ENCODE measurements at regions of chr1 and their contacts with region 1.

Region 1: DNA sequence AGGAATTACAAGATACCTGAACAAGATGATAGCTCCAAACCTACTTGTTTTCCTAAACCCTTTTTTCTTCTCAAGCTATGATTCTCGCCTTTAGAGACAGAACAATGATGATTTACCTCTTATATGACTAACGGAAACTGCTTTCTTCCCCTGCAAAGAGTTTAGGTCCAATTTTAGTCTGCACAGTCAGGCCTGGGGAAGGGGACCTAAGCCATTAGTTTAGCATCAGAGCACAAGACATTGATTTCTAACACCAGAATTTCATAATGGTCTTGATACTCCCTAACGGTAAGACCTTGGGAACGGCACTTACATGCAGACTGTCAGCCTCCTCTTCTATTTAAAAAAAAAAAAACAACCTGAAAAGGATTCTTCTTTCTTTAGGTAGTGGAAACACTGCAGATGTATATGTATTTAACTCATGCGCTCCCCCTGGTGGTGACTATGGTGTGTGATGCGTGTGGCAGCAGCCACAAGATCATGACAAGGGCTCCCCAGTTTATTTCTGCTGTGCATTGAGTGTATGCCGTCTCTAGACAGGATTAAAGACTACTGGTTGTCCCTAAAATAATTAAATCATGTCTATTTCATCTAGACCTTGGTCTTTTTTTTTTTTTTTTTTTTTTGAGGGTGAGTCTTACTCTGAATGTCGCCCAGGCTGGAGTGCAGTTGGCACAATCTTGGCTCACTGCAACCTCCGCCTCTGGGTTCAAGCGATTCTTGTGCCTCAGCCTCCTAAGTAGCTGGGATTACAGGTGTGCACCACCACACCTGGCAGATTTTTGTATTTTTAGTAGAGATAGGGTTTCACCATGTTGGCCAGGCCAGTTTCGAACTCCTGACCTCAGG is 37.3 kb upstream of the TMEM222 start:
- DNase-seq: peak; percentile 79 to 86
- H3K4me3 ChIP-seq: no peak overlapping the region
- H3K27ac ChIP-seq: no peak overlapping the region
- H3K4me1 ChIP-seq: no peaks in the 10 kb centered on the region
- H3K27me3 ChIP-seq: no peaks in the 10 kb centered on the region
- CTCF ChIP-seq: peak; percentile 57 to 71 (median 70)
- POLR2A ChIP-seq: no peak

Region 2: GRCh38 chr1:25874934-25875855 is 1409.5 kb before region 1 on chr1 and contains the start of gene PAQR7:
- intact Hi-C with region 1: no loop called
- DNase-seq: peak; percentile 67 to 70
- H3K4me3 ChIP-seq: peak within 1 kb of the TSS; percentile 54 to 80 (median 72)
- H3K27ac ChIP-seq: peak within 1 kb of the TSS; percentile 93 to 96
- H3K4me1 ChIP-seq: peaks cover 3 to 13% of the 10 kb centered on the region in 2 donors
- H3K27me3 ChIP-seq: no peaks in the 10 kb centered on the region
- CTCF ChIP-seq: no peak
- POLR2A ChIP-seq: no peak
- total RNA-seq, gene PAQR7: 4.2 to 8.2 (median 7.2) TPM

Region 3: GRCh38 chr1:27102707-27103491 is 181.8 kb before region 1 on chr1:
- intact Hi-C with region 1: loop called (anchors 5 kb)
- DNase-seq: peak; percentile 64 to 82
- H3K4me3 ChIP-seq: no peak overlapping the region
- H3K27ac ChIP-seq: no peak overlapping the region
- H3K4me1 ChIP-seq: peaks cover 16 to 19% of the 10 kb centered on the region in 2 donors
- H3K27me3 ChIP-seq: no peaks in the 10 kb centered on the region
- CTCF ChIP-seq: peak; percentile 91 to 99 (median 98)
- POLR2A ChIP-seq: no peak

Region 4: GRCh38 chr1:27327964-27328363 is 43.3 kb after region 1 on chr1:
- intact Hi-C with region 1: no loop called
- DNase-seq: no peak
- H3K4me3 ChIP-seq: no peak overlapping the region
- H3K27ac ChIP-seq: no peak overlapping the region
- H3K4me1 ChIP-seq: peaks cover 0 to 14% of the 10 kb centered on the region in 2 donors
- H3K27me3 ChIP-seq: no peaks in the 10 kb centered on the region
- CTCF ChIP-seq: no peak
- POLR2A ChIP-seq: no peak

Region 5: GRCh38 chr1:27339213-27339612 is 54.6 kb after region 1 on chr1:
- intact Hi-C with region 1: loop called (anchors 2 kb)
- DNase-seq: no peak
- H3K4me3 ChIP-seq: no peak overlapping the region
- H3K27ac ChIP-seq: no peak overlapping the region
- H3K4me1 ChIP-seq: peaks cover 3 to 4% of the 10 kb centered on the region in 2 donors
- H3K27me3 ChIP-seq: no peaks in the 10 kb centered on the region
- CTCF ChIP-seq: no peak
- POLR2A ChIP-seq: no peak

Region 6: DNA sequence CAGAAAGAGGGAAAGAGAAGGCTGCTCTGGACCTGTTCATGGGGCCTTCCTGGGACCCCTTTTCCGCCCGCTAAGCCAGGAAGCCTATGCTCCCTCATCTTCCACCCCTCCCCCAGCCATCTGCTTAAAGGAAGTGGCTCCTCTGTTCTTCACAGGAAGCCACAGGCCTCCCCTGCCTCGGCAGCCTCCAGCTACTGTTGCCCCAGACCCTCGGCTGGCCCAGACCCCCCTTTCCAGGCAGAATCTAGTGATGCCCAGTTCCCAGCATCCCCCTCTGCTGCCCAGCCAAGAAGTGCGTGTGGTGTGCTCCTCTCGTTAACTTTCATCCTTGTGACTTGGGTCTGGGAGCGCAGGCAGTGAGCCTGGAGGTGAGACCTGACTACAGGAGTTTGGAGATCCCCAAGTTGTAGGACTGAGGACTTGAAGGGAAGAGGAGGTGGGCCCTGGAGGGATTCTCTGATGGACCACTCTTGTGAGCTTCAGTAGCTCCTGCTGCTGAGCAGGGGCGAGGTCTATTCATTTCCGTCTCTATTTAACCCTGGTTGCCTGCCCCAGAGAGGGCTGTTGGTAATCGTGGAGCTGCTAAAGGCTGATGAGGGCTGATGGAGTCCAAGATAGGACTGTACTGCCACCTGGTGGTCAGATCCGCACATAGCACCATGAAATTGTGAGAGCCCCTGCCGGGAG is 378.2 kb after region 1 on chr1:
- intact Hi-C with region 1: no loop called
- DNase-seq: peak; percentile 77 to 85
- H3K4me3 ChIP-seq: no peak overlapping the region
- H3K27ac ChIP-seq: peak overlapping the region; percentile 46 to 54
- H3K4me1 ChIP-seq: no peaks in the 10 kb centered on the region
- H3K27me3 ChIP-seq: no peaks in the 10 kb centered on the region
- CTCF ChIP-seq: peak; percentile 94 to 96 (median 94)
- POLR2A ChIP-seq: no peak

Region 7: DNA sequence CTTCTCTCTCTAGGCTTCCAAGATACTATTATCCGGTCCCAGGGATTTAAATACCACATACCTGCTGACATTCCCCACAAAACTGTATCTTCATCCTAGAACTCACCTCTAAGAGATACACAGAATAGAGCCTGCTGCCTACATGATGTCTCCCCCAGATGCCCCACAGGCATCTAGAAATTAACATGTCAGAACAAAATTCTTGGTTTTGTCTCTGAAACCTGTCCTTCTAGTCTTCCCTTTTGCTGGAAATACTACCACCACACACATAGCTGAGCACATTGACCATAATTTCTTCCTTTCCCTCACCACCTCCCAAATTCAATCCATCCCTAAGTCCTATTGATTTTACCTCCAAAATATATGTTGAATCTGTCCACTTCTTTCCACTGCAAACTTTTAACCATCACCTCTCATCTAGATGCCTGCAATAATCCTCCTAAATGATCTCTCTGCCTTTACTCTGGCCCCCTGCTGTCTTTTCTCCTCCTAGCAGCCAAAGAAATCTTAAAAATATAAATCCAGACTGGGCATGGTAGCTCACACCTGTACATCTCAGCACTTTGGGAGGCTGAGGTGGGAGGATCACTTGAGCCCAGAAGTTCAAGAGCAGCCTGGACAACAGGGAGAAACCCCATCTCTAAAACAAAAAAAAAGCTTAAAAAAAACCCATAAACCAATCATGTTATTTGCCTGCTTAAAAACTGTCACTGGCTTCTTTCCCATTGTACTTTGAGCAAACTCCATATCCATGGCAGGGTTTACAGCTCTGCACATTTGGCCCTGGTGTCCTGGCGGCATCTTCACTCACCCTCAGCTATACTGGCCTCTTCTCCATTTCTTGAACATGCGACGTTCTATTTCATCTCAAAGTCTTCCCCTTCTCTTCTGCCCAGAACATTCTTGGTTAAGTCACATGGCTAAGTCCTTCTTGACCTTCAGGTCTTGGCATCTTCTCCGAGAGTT is 434.9 kb after region 1 on chr1:
- intact Hi-C with region 1: no loop called
- DNase-seq: no peak
- H3K4me3 ChIP-seq: no peak overlapping the region
- H3K27ac ChIP-seq: no peak overlapping the region
- H3K4me1 ChIP-seq: no peaks in the 10 kb centered on the region
- H3K27me3 ChIP-seq: no peaks in the 10 kb centered on the region
- CTCF ChIP-seq: no peak
- POLR2A ChIP-seq: no peak